ENCODE measurements at regions of chr3 and their contacts with region 1.

Region 1: DNA sequence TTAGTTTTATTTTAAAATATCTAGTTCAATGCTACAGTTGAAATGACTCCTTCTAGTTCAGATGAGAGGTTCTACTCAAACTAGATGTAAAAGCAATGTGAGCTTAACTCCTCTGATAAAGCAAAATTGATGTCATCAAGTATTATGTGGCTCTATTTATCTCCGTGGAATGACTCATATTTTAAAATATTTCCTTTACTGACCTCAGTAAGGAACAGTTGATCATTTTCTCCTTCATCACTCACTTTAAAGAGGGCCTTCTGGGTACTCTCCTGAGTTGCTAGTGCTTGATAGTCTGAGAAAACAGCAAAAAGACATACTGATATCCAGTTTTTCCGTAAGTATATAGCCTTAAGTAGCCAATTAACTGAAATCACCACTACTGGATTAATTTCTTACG is 1099.3 kb downstream of the ROBO2 start:
- DNase-seq: peak; percentile 83
- ATAC-seq: peak; percentile 65
- H3K4me3 ChIP-seq: no peak overlapping the region
- H3K27ac ChIP-seq: peak overlapping the region; percentile 78
- H3K4me1 ChIP-seq: peaks cover 53% of the 10 kb centered on the region
- H3K27me3 ChIP-seq: no peaks in the 10 kb centered on the region
- CTCF ChIP-seq: no peak

Region 2: DNA sequence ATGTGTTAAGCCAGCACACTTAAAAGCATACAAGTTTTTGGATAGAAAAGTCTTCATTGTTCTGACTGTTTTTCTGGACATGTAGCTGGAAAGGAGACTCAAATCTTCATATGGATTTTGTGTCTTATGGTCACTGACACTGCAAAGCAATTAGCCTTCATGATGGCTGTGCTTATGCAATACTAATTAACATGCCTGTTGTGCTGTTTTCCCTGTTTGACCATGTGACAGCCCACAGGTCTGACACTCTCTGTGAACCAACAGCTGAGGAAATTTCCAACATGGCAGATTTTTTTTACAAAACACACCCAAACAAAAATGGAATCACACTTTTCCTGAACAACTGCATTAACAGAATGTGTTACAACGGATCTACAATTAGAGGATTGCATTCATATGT is 850.8 kb before region 1 on chr3:
- CTCF ChIA-PET with region 1: no interaction called
- POLR2A ChIA-PET with region 1: no interaction called
- intact Hi-C with region 1: no loop called
- DNase-seq: no peak
- ATAC-seq: no peak
- H3K4me3 ChIP-seq: no peak overlapping the region
- H3K27ac ChIP-seq: no peak overlapping the region
- H3K4me1 ChIP-seq: no peaks in the 10 kb centered on the region
- H3K27me3 ChIP-seq: peaks cover 47% of the 10 kb centered on the region
- CTCF ChIP-seq: no peak

Region 3: GRCh38 chr3:77605308-77605707 is 533.9 kb before region 1 on chr3:
- CTCF ChIA-PET with region 1: no interaction called
- POLR2A ChIA-PET with region 1: no interaction called
- intact Hi-C with region 1: loop called (anchors 5 kb)
- DNase-seq: peak; percentile 78
- ATAC-seq: peak; percentile 38
- H3K4me3 ChIP-seq: no peak overlapping the region
- H3K27ac ChIP-seq: peak overlapping the region; percentile 87
- H3K4me1 ChIP-seq: peaks cover 31% of the 10 kb centered on the region
- H3K27me3 ChIP-seq: no peaks in the 10 kb centered on the region
- CTCF ChIP-seq: no peak

Region 4: DNA sequence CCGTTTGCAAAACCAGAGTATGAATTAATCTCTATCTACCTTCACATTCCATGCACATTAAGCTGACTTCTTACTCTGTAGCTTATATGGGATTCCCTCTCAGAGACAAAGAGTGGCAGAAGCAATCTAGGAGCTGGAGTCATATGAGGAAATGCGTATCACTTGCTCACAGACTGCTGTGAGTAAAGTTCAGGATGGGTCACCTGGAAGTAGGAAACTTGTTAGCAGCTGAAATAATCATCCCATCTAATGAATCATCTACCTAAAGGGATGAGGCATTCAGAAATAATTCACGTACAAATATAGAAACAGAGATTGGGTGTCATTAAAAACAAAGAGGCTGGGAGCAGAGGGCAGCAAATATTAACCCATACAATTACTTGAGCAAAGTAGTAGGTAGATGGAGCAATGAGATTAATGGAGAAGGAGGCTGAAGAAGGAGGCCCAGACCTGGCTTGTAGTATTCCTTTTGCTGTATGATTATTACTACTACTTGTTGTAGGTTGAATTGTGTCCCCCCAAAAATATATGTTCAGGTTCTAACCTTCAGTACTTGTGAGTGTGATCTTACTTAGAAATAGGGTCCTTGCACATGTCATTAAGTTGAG is 233.0 kb before region 1 on chr3:
- CTCF ChIA-PET with region 1: no interaction called
- POLR2A ChIA-PET with region 1: no interaction called
- intact Hi-C with region 1: loop called (anchors 1 kb)
- DNase-seq: peak; percentile 96
- ATAC-seq: peak; percentile 95
- H3K4me3 ChIP-seq: no peak overlapping the region
- H3K27ac ChIP-seq: peak overlapping the region; percentile 95
- H3K4me1 ChIP-seq: peaks cover 24% of the 10 kb centered on the region
- H3K27me3 ChIP-seq: no peaks in the 10 kb centered on the region
- CTCF ChIP-seq: no peak; the same call in 1 of the 2 replicates

Region 5: GRCh38 chr3:78076379-78076778 is 62.8 kb before region 1 on chr3:
- CTCF ChIA-PET with region 1: no interaction called
- POLR2A ChIA-PET with region 1: interaction called, 3 read pairs
- intact Hi-C with region 1: loop called (anchors 1 kb)
- DNase-seq: no peak
- ATAC-seq: no peak
- H3K4me3 ChIP-seq: no peak overlapping the region
- H3K27ac ChIP-seq: no peak overlapping the region
- H3K4me1 ChIP-seq: peaks cover 30% of the 10 kb centered on the region
- H3K27me3 ChIP-seq: no peaks in the 10 kb centered on the region
- CTCF ChIP-seq: no peak

Region 6: GRCh38 chr3:78112291-78113010 is 26.7 kb before region 1 on chr3:
- CTCF ChIA-PET with region 1: no interaction called
- POLR2A ChIA-PET with region 1: no interaction called
- intact Hi-C with region 1: no loop called
- DNase-seq: no peak
- ATAC-seq: no peak
- H3K4me3 ChIP-seq: no peak overlapping the region
- H3K27ac ChIP-seq: no peak overlapping the region
- H3K4me1 ChIP-seq: peaks cover 12% of the 10 kb centered on the region
- H3K27me3 ChIP-seq: no peaks in the 10 kb centered on the region
- CTCF ChIP-seq: no peak

Region 7: DNA sequence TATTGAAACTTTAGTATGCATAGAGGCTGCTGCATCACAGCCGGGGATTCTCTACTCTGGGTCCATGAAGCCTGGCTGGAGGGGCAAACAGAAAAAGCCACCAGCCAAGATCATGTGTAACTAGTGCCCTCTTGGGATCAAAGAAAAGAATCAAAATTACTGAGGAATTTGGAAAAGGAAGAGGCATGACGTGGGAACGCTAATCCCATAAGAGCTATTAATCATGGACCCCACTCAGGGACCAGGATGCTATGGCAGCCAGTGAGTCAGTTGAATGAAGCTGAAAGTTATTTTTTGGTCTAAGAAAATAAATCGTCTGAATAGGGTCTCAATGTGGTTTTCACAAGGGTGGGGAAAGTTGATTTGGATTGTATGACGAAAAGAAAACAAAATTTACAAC is 65.8 kb after region 1 on chr3:
- CTCF ChIA-PET with region 1: no interaction called
- POLR2A ChIA-PET with region 1: no interaction called
- intact Hi-C with region 1: loop called (anchors 2 kb)
- DNase-seq: peak; percentile 82
- ATAC-seq: peak; percentile 81
- H3K4me3 ChIP-seq: peak overlapping the region; percentile 51
- H3K27ac ChIP-seq: 0 out of 2 replicates have a peak overlapping the region, but pooled peaks have one; percentile 6
- H3K4me1 ChIP-seq: peaks cover 4% of the 10 kb centered on the region; the same call in 1 of the 2 replicates
- H3K27me3 ChIP-seq: no peaks in the 10 kb centered on the region
- CTCF ChIP-seq: peak; percentile 77

Measured in PC-3 (cell line).